B cell (primary cell): ENCODE measurements at regions of chr6 and their contacts with region 1.

Region 1: GRCh38 chr6:72084992-72085569 is 198.7 kb downstream of the RIMS1 start:
- DNase-seq: peak; percentile 7
- ATAC-seq: no peak
- H3K4me3 ChIP-seq: no peak overlapping the region
- H3K4me3 Mint-ChIP-seq: no peak overlapping the region
- H3K27ac ChIP-seq: no peak overlapping the region
- H3K27ac Mint-ChIP-seq: no peak overlapping the region
- H3K4me1 ChIP-seq: no peaks in the 10 kb centered on the region
- H3K4me1 Mint-ChIP-seq: no peaks in the 10 kb centered on the region
- H3K27me3 ChIP-seq: no peaks in the 10 kb centered on the region
- H3K27me3 Mint-ChIP-seq: peaks cover 10% of the 10 kb centered on the region
- CTCF ChIP-seq: peak; percentile 70

Region 2: DNA sequence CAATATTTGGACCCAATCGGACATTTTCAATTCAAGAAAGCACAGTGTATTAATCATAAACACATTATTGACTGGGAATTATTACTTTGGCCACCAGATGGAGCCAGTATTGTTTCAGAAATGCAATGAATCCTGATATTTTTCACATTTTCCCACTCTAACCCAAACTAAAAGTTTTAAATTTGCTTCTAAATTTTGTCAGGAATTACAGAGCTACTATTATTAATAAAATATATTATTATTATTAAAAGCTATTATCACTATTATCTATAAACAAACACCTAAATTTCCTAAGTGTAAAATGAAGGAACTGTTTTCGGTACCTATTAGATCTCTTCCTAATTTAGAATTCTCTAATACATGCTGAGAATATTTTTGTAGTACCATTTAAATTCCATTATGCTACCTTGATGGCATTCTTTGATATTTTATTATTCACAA is 551.1 kb before region 1 on chr6:
- CTCF ChIA-PET with region 1: no interaction called
- POLR2A ChIA-PET with region 1: no interaction called
- intact Hi-C with region 1: loop called (anchors 2 kb)
- DNase-seq: peak; percentile 6
- ATAC-seq: no peak
- H3K4me3 ChIP-seq: no peak overlapping the region
- H3K4me3 Mint-ChIP-seq: no peak overlapping the region
- H3K27ac ChIP-seq: no peak overlapping the region
- H3K27ac Mint-ChIP-seq: no peak overlapping the region
- H3K4me1 ChIP-seq: no peaks in the 10 kb centered on the region
- H3K4me1 Mint-ChIP-seq: no peaks in the 10 kb centered on the region
- H3K27me3 ChIP-seq: peaks cover 0 to 4% (median 0%) of the 10 kb centered on the region in 4 experiments
- H3K27me3 Mint-ChIP-seq: peaks cover 8% of the 10 kb centered on the region
- CTCF ChIP-seq: peak; percentile 82

Region 3: DNA sequence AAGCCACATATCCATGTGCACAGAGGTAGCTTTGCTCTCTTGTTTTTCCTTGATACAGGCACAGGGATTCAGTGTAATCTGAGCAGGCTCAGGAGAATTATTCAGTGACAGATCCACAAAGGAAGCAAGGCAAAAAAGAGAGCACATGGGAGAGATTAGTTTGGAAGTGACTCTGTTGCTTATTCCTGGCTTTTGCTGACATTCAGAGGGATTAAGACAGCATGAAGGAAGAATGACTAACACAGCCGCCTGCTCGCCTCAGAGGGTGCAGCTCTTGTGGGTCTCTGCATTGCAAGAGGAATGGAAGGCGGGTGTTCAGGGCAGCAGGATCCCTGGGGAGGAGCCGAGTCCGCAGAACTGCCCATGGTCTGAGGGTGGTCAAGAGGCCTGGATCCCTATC is 333.4 kb after region 1 on chr6:
- CTCF ChIA-PET with region 1: no interaction called
- POLR2A ChIA-PET with region 1: no interaction called
- intact Hi-C with region 1: no loop called
- DNase-seq: no peak
- ATAC-seq: no peak
- H3K4me3 ChIP-seq: no peak overlapping the region
- H3K4me3 Mint-ChIP-seq: no peak overlapping the region
- H3K27ac ChIP-seq: no peak overlapping the region
- H3K27ac Mint-ChIP-seq: no peak overlapping the region
- H3K4me1 ChIP-seq: no peaks in the 10 kb centered on the region
- H3K4me1 Mint-ChIP-seq: no peaks in the 10 kb centered on the region
- H3K27me3 ChIP-seq: peaks cover 0 to 4% (median 1%) of the 10 kb centered on the region in 4 experiments
- H3K27me3 Mint-ChIP-seq: peaks cover 19% of the 10 kb centered on the region
- CTCF ChIP-seq: no peak